ENCODE measurements at regions of chr3 and their contacts with region 1.

Region 1: GRCh38 chr3:78812166-78812565 is 955.6 kb downstream of the ROBO1 start:
- DNase-seq: no peak
- ATAC-seq: no peak; the same call in 2 of the 3 replicates
- H3K4me3 ChIP-seq: no peak overlapping the region
- H3K27ac ChIP-seq: no peak overlapping the region
- H3K4me1 ChIP-seq: no peaks in the 10 kb centered on the region
- H3K27me3 ChIP-seq: no peaks in the 10 kb centered on the region
- CTCF ChIP-seq: no peak
- EP300 ChIP-seq: no peak
- POLR2A ChIP-seq: no peak
- RAD21 ChIP-seq: no peak

Region 2: GRCh38 chr3:78751266-78751665 is 60.9 kb before region 1 on chr3:
- CTCF ChIA-PET with region 1: no interaction called
- POLR2A ChIA-PET with region 1: no interaction called
- RAD21 ChIA-PET with region 1: no interaction called
- SMC1A ChIA-PET with region 1: no interaction called
- in situ Hi-C with region 1: no loop called
- intact Hi-C with region 1: no loop called
- DNase-seq: no peak
- ATAC-seq: no peak
- H3K4me3 ChIP-seq: no peak overlapping the region
- H3K27ac ChIP-seq: no peak overlapping the region
- H3K4me1 ChIP-seq: no peaks in the 10 kb centered on the region
- H3K27me3 ChIP-seq: no peaks in the 10 kb centered on the region
- CTCF ChIP-seq: no peak
- EP300 ChIP-seq: no peak
- POLR2A ChIP-seq: no peak
- RAD21 ChIP-seq: no peak

Region 3: DNA sequence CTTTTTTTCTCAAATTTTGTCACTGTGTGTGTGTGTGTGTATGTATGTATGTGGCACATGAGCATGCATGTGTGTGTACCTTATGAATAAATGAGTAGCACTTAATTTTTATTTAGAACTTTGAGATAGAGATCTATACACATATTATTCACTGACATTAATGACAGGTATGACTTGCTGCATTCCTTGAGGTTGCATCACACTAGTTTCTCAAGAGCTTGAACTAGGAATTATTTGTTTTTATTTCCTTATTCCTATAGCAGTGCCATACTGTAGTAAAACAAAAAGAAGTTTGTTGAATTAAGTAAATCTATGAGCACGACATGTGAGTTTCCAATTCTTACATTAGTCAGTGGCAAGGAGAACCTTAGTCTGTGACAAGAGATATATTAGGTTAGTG is 11.7 kb after region 1 on chr3:
- CTCF ChIA-PET with region 1: interaction called, 3 read pairs
- POLR2A ChIA-PET with region 1: interaction called, 3 read pairs
- RAD21 ChIA-PET with region 1: no interaction called
- SMC1A ChIA-PET with region 1: interaction called, 13 read pairs
- in situ Hi-C with region 1: no loop called
- intact Hi-C with region 1: no loop called
- DNase-seq: no peak
- ATAC-seq: no peak
- H3K4me3 ChIP-seq: no peak overlapping the region
- H3K27ac ChIP-seq: no peak overlapping the region
- H3K4me1 ChIP-seq: no peaks in the 10 kb centered on the region
- H3K27me3 ChIP-seq: no peaks in the 10 kb centered on the region
- CTCF ChIP-seq: no peak
- EP300 ChIP-seq: no peak
- POLR2A ChIP-seq: no peak
- RAD21 ChIP-seq: no peak